ENCODE measurements at regions of chr1 and their contacts with region 1.

Region 1: GRCh38 chr1:47558601-47559593 is 121.1 kb downstream of the FOXD2 start:
- DNase-seq: no peak
- H3K4me3 ChIP-seq: no peak overlapping the region
- CTCF ChIP-seq: no peak

Region 2: DNA sequence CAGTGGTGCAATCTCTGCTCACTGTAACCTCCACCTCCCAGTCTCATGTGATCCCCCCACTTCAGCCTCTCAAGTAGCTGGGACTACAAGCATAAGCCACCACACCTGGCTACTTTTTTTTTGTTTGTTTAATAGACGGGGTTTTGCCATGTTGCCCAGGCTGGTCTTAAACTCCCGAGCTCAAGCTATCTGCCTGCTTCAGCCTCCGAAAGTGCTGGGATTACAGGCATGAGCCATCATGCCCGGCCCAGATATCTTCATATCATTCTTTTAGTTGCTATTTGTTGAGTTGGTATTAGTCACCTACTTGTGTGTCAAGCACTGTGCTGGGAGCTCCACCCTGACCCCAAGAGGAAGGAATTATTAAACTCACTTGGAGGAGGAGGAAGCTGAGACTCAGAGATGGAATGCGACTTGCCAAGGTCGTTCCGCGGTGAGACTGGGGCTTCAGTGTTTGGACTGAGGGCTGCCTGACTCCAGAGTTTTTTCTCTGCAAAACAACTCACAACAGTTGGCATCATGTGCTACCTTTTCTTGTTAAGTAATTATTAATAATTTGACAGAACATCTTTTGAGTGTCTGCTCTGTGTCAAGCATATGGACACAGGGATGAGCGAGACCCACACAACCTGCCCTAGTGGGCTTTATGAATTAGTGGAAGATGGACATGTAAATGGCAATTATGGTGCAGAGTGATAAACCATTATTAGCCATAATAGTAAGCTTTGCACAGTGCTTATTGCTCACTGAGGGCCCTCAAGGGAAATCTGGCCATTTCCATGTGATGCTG is 11.0 kb after region 1 on chr1:
- CTCF ChIA-PET with region 1: interaction called, 16 read pairs
- POLR2A ChIA-PET with region 1: interaction called, 3 read pairs
- DNase-seq: peak; percentile 85
- H3K4me3 ChIP-seq: no peak overlapping the region
- CTCF ChIP-seq: peak; percentile 63